ENCODE measurements at regions of chr2 and their contacts with region 1.

Region 1: DNA sequence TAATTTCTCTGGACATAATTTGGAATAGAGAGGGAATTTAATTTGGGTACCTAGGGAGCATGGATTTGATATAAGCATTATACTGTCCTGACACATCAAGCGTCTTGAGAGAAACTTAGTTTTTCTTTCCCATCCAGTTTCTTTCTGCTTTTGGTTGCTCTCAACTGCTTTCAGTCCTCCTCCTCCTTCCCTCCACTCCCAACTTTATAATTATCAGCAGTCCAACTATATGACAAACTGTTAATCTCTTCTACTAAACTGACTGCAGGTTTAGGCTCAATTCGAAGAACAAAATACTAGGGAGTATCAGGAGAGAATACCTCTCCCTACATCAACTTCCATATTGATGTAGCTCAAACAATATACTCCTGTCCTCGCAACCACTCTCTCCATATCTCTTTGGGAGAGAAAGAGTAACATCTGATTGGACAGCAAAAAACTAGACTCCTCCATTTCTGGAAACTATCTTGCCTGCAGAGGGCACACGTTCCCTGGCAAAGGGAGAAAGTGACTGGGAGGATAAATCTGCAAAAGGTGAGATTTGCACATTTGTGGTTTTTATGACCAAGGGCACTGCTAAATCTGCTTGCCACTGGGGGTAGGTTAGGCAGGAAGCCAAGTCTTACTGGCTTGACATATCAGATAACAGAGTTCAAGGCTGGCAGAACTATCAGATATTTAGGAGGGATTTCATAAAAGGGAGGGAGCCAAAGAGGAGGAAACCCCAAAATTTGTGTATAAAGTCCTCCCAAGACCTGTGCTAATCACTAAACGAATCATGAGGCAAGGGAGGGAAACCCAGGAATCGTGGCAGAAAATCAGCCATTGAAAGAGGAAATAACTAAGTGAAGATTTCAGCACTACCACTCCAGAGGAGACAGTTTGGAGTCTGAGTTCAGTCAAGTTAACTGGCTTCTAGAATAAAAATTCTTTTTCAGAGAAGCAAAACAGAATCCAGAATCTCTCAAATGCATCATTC is 40.0 kb downstream of the ICA1L start:
- DNase-seq: peak; percentile 79
- ATAC-seq: peak; percentile 99
- H3K4me3 ChIP-seq: no peak overlapping the region
- H3K27ac ChIP-seq: no peak overlapping the region
- H3K4me1 ChIP-seq: peaks cover 15% of the 10 kb centered on the region
- H3K27me3 ChIP-seq: no peaks in the 10 kb centered on the region
- CTCF ChIP-seq: peak; percentile 95
- EP300 ChIP-seq: no peak
- POLR2A ChIP-seq: no peak
- RAD21 ChIP-seq: peak; percentile 84

Region 2: DNA sequence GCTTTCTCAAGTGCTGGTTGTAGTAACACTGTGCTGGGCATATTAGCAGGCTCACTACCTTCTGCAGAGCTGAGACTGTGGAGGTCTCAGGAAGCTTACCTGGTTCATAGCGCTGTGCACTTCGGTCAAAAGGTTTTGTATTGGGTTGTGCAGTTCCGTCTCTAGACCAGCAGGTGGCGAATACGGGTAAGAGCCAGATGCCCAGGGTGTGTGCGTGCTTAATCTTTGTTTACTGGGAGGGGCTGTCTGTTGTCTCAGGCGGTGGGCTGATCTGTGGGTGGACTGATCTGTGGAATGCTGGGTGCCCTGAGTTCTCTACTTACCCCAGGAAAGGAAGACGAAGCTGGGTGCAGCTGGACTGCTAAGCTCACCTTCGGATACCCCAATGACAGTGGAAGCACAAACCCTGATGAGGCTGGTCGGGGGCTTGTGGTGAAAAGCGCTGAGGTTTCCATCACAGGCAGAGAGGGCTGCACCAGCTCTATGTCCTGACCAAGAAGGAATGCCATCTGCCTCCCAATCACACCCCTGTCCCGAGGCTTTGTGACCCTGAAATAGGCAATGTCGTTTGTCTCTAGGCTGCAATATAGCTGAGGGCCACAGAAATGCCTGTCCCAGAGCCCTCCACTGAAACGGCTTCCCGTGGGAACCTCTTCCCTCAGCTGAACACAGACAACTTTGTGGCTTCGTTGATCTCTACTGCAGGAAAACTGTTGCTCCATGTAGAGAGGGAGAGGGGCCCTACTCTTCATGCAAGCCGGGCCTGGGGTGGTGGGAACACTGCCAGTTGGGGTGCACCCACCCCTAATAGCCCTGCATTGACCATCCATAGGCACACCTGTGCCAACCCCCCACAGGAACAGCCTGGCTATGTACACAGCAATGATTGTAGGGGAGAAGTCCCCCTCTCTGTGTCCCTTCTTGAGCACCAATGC is 242.6 kb before region 1 on chr2:
- CTCF ChIA-PET with region 1: no interaction called
- POLR2A ChIA-PET with region 1: no interaction called
- in situ Hi-C with region 1: no loop called
- intact Hi-C with region 1: loop called (anchors 1 kb)
- DNase-seq: peak; percentile 89
- ATAC-seq: peak; percentile 92
- H3K4me3 ChIP-seq: peak overlapping the region; percentile 44 to 71 (median 54)
- H3K27ac ChIP-seq: no peak overlapping the region
- H3K4me1 ChIP-seq: peaks cover 20% of the 10 kb centered on the region
- H3K27me3 ChIP-seq: no peaks in the 10 kb centered on the region
- CTCF ChIP-seq: peak; percentile 99
- EP300 ChIP-seq: peak; percentile 43 to 44; a peak in 2 of 4 replicates
- POLR2A ChIP-seq: peak in 1 of 2 experiments; percentile 54; a peak in 2 of 4 replicates
- RAD21 ChIP-seq: peak; percentile 93

Region 3: DNA sequence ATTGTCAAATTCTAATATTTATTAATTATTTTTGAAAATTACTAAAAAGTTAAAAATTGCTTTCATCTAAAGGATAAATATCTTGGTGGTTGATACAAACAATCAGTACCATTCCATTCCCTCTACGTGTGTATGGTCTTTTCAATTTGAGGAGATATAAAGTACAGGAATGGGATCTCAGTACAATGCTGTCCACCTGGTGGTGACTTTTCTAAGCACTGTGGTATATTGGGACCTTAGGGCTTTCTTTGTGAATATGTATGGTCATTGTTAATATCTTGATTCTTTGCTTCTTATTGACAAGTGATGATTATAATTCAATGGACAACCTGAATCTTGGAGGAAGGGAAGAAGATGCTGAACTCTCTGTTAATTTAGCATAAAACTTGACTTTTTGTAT is 266.2 kb after region 1 on chr2:
- CTCF ChIA-PET with region 1: interaction called, 6 read pairs
- POLR2A ChIA-PET with region 1: no interaction called
- in situ Hi-C with region 1: no loop called
- intact Hi-C with region 1: loop called (anchors 1 kb)
- DNase-seq: peak; percentile 36
- ATAC-seq: peak; percentile 90
- H3K4me3 ChIP-seq: no peak overlapping the region
- H3K27ac ChIP-seq: no peak overlapping the region
- H3K4me1 ChIP-seq: no peaks in the 10 kb centered on the region
- H3K27me3 ChIP-seq: no peaks in the 10 kb centered on the region
- CTCF ChIP-seq: peak; percentile 48
- EP300 ChIP-seq: no peak
- POLR2A ChIP-seq: no peak
- RAD21 ChIP-seq: no peak

Region 4: DNA sequence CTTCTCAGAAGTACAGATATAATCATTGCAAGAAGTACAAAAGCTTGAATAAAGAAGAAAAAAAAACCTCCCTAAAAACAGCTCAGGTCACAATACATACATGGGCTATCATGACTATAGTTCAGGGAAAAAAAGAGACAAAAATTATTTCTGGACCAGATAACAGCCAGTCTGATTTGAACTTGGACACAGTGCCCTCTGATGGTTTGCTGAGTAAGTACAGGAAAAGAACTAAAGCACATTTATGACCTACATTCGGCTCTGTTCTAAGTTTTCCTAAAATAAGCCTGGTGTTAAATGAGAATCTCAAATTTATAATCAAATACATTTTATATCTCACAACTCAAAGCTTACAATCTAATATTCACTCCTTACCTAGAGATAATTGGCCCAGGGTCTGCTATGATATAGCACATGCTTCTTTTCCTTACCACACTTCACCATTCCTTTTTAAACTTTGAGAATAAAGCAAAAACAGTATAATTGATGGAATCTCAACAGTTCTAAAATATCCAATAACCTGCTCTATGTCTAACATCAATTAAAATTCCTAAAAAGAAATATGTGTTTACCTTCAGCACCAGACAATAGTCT is 622.4 kb after region 1 on chr2:
- CTCF ChIA-PET with region 1: no interaction called
- POLR2A ChIA-PET with region 1: no interaction called
- in situ Hi-C with region 1: no loop called
- intact Hi-C with region 1: loop called (anchors 10 kb)
- DNase-seq: peak; percentile 61
- ATAC-seq: peak; percentile 89
- H3K4me3 ChIP-seq: no peak overlapping the region
- H3K27ac ChIP-seq: no peak overlapping the region
- H3K4me1 ChIP-seq: peaks cover 7% of the 10 kb centered on the region; the same call in 1 of the 2 replicates
- H3K27me3 ChIP-seq: no peaks in the 10 kb centered on the region
- CTCF ChIP-seq: peak; percentile 78
- EP300 ChIP-seq: no peak
- POLR2A ChIP-seq: no peak
- RAD21 ChIP-seq: 0 out of 2 replicates have a peak, but pooled peaks have one; percentile 47

Measured in HepG2 (cell line).